Body of pancreas (tissue), 4 donors: ENCODE measurements at regions of chr13 and their contacts with region 1.

Region 1: GRCh38 chr13:40682449-40683240 is 16.2 kb upstream of the FOXO1 start:
- DNase-seq: no peak
- ATAC-seq: peak; percentile 30
- H3K4me3 ChIP-seq: no peak overlapping the region
- H3K27ac ChIP-seq: no peak overlapping the region
- H3K4me1 ChIP-seq: no peaks in the 10 kb centered on the region
- H3K27me3 ChIP-seq: no peaks in the 10 kb centered on the region
- CTCF ChIP-seq: peak in 6 of 7 experiments; percentile 51 to 74 (median 61)
- POLR2A ChIP-seq: no peak

Region 2: GRCh38 chr13:39942552-39943273 is 739.9 kb before region 1 on chr13:
- intact Hi-C with region 1: loop called (anchors 10 kb)
- DNase-seq: peak; percentile 77 to 82 (median 80)
- ATAC-seq: peak; percentile 96
- H3K4me3 ChIP-seq: no peak overlapping the region
- H3K27ac ChIP-seq: no peak overlapping the region
- H3K4me1 ChIP-seq: no peaks in the 10 kb centered on the region
- H3K27me3 ChIP-seq: no peaks in the 10 kb centered on the region
- CTCF ChIP-seq: peak; percentile 80 to 99 (median 98)
- POLR2A ChIP-seq: no peak

Region 3: GRCh38 chr13:40069173-40070044 is 613.2 kb before region 1 on chr13:
- intact Hi-C with region 1: loop called (anchors 10 kb)
- DNase-seq: peak; percentile 82 to 88 (median 83)
- ATAC-seq: peak; percentile 89
- H3K4me3 ChIP-seq: no peak overlapping the region
- H3K27ac ChIP-seq: peak overlapping the region in 2 of 4 donors; percentile 12 to 22
- H3K4me1 ChIP-seq: peaks cover 23% of the 10 kb centered on the region
- H3K27me3 ChIP-seq: no peaks in the 10 kb centered on the region
- CTCF ChIP-seq: peak; percentile 74 to 92 (median 86)
- POLR2A ChIP-seq: no peak

Region 4: GRCh38 chr13:40639221-40639681 is 43.4 kb before region 1 on chr13:
- intact Hi-C with region 1: no loop called
- DNase-seq: peak in 1 of 4 donors; percentile 44
- ATAC-seq: peak; percentile 50
- H3K4me3 ChIP-seq: no peak overlapping the region
- H3K27ac ChIP-seq: peak overlapping the region in 2 of 4 donors; percentile 7 to 37
- H3K4me1 ChIP-seq: peaks cover 40% of the 10 kb centered on the region
- H3K27me3 ChIP-seq: no peaks in the 10 kb centered on the region
- CTCF ChIP-seq: no peak
- POLR2A ChIP-seq: no peak